PC-9 (cell line): ENCODE measurements at regions of chr20 and their contacts with region 1.

Region 1: GRCh38 chr20:45934586-45935415 is at the start of gene PCIF1:
- DNase-seq: peak; percentile 88 to 98
- H3K4me3 ChIP-seq: peak within 1 kb of the TSS; percentile 73
- H3K27ac ChIP-seq: peak within 1 kb of the TSS; percentile 93
- H3K4me1 ChIP-seq: peaks cover 11% of the 10 kb centered on the region
- H3K27me3 ChIP-seq: no peaks in the 10 kb centered on the region
- CTCF ChIP-seq: no peak
- total RNA-seq, gene PCIF1: 35.3 and 35.6 TPM in 2 replicates

Region 2: GRCh38 chr20:45880988-45881788 is 53.6 kb before region 1 on chr20 and contains the start of gene ZSWIM1:
- CTCF ChIA-PET with region 1: no interaction called
- POLR2A ChIA-PET with region 1: interaction called, 19 read pairs
- intact Hi-C with region 1: no loop called
- DNase-seq: peak; percentile 98 to 99
- H3K4me3 ChIP-seq: peak within 1 kb of the TSS; percentile 67
- H3K27ac ChIP-seq: peak within 1 kb of the TSS; percentile 14; the same call in 1 of the 2 replicates
- H3K4me1 ChIP-seq: peaks cover 31% of the 10 kb centered on the region
- H3K27me3 ChIP-seq: no peaks in the 10 kb centered on the region
- CTCF ChIP-seq: no peak
- total RNA-seq, gene ZSWIM1: 13.2 and 13.5 TPM in 2 replicates

Region 3: DNA sequence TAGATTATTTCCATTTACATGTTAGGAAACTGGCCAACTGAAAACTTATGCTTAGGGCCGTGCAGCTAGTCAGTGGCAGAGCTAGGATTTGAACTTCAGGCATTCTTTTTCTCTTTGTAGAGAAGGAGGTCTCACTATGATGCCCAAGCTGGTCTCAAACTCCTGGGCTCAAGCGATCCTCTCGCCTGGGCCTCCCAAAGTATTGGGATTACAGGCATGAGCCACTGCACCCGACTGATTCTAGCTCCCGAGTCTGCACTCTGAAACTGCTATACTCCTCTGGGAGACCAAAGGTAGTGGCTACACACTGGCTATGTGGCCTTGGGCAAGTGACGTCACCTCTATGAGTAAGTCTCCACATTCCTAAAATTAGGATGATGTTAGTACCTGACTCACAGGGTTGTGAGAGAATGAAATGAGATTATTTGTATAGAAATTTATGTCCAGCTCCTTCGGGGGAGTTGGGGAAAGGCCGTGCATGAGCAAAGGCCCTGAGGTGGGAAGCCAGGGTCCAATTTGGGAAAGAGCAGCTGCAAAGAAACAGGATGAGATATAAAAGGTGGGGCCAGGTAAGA is 29.2 kb before region 1 on chr20:
- CTCF ChIA-PET with region 1: no interaction called
- POLR2A ChIA-PET with region 1: interaction called, 11 read pairs
- intact Hi-C with region 1: loop called (anchors 2 kb)
- DNase-seq: peak; percentile 66 to 95
- H3K4me3 ChIP-seq: no peak overlapping the region
- H3K27ac ChIP-seq: peak overlapping the region; percentile 65
- H3K4me1 ChIP-seq: peaks cover 18% of the 10 kb centered on the region
- H3K27me3 ChIP-seq: no peaks in the 10 kb centered on the region
- CTCF ChIP-seq: no peak

Region 4: DNA sequence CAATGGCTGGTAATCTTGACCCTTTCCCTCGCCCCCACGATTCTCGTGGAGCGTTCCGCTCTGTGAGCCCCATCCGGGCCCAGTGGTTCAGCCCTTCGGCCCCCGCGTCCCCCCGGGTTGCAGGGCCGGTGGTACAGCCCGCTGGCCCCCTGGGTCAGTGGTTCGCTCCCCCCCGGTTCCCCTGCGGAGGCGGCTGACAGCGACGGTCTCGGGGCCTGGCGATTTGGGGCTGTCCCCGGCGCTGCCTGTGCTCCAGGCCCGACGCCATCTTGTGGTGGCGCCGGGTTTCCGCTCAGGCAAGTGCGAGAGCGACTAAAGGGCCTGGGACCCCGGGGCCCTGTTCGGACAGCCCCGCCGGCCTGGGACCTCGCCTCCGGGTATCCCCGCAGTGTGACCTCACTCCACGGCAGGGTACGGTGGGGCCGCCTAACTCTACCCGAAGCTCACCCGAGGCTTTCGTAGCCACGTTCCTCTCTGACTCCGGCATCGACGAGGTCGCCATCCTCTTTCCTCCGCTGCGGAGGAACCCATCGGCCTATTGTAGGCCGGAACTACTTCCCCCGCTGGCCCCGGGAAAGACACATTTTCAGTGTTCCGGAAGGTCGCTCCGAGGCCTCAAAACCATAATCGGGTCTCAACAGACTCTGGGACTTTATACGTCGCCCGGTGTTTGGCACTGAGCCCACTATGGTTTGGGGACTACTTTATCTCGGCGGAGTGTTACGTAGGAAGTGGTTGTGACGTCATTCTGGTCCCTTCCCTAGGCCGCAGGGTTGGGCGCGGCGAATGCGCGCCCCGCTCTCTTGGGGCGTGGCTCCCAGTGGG is 37.1 kb after region 1 on chr20 and contains the start of gene ZNF335:
- CTCF ChIA-PET with region 1: interaction called, 5 read pairs
- POLR2A ChIA-PET with region 1: interaction called, 31 read pairs
- intact Hi-C with region 1: loop called (anchors 2 kb)
- DNase-seq: peak; percentile 91 to 98
- H3K4me3 ChIP-seq: peak within 1 kb of the TSS; percentile 79
- H3K27ac ChIP-seq: peak within 1 kb of the TSS; percentile 98
- H3K4me1 ChIP-seq: peaks cover 24% of the 10 kb centered on the region
- H3K27me3 ChIP-seq: no peaks in the 10 kb centered on the region
- CTCF ChIP-seq: peak; percentile 60
- total RNA-seq, gene ZNF335: 14.1 and 16.3 TPM in 2 replicates